ENCODE measurements at regions of chr16 and their contacts with region 1.

Region 1: GRCh38 chr16:75305364-75306098 is 54.1 kb upstream of the BCAR1 start:
- DNase-seq: peak; percentile 94
- H3K4me3 Mint-ChIP-seq: peak overlapping the region; percentile 36
- H3K27ac Mint-ChIP-seq: peak overlapping the region; percentile 90
- H3K4me1 Mint-ChIP-seq: peaks cover 29% of the 10 kb centered on the region
- H3K27me3 Mint-ChIP-seq: no peaks in the 10 kb centered on the region

Region 2: DNA sequence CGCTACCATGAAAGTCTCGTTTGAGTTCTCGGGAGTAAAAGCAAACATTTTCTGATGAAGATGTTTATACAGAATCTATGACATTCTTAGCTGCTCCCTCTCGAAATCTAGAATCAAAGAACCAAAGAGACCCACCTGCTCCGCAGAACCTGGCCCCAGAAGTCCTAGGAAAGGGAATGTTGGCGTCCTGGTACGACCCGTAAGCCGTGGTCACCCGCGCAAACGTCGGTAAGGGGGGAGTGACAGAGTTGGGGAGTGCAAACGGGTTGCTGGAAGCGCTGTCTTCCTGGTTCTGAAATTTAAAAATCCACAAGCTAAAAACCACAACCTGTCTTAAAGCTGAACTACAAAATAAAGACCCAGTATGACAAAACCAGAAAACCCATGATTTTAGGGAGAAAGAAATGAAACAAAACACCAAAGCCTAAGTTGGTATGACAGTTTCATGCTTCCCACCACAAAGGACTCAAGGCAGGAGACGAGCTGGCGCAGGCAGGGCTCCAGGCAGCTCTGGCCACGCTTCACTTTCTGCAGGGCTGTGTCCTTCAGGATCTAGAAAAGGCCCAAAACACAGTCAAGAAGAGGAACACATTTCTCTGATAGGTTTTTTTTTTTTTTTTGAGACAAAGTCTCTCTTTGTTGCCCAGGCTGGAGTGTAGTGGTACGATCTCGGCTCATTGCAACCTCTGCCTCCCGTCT is 396.0 kb before region 1 on chr16:
- CTCF ChIA-PET with region 1: no interaction called
- intact Hi-C with region 1: no loop called
- DNase-seq: no peak
- H3K4me3 Mint-ChIP-seq: no peak overlapping the region
- H3K27ac Mint-ChIP-seq: no peak overlapping the region
- H3K4me1 Mint-ChIP-seq: no peaks in the 10 kb centered on the region
- H3K27me3 Mint-ChIP-seq: no peaks in the 10 kb centered on the region

Region 3: GRCh38 chr16:75011634-75012307 is 293.8 kb before region 1 on chr16:
- CTCF ChIA-PET with region 1: no interaction called
- intact Hi-C with region 1: loop called (anchors 1 kb)
- DNase-seq: peak; percentile 86
- H3K4me3 Mint-ChIP-seq: peak overlapping the region; percentile 62
- H3K27ac Mint-ChIP-seq: peak overlapping the region; percentile 95
- H3K4me1 Mint-ChIP-seq: peaks cover 48% of the 10 kb centered on the region
- H3K27me3 Mint-ChIP-seq: no peaks in the 10 kb centered on the region

Region 4: GRCh38 chr16:75251280-75252048 is 54.1 kb before region 1 on chr16 and contains the start of gene BCAR1:
- CTCF ChIA-PET with region 1: no interaction called
- intact Hi-C with region 1: loop called (anchors 2 kb)
- DNase-seq: peak; percentile 22
- H3K4me3 Mint-ChIP-seq: peak within 1 kb of the TSS; percentile 64
- H3K27ac Mint-ChIP-seq: no peak within 1 kb of the TSS
- H3K4me1 Mint-ChIP-seq: peaks cover 3% of the 10 kb centered on the region
- H3K27me3 Mint-ChIP-seq: peaks cover 31% of the 10 kb centered on the region
- total RNA-seq, gene BCAR1: 0.67 to 0.81 TPM

Region 5: GRCh38 chr16:75379911-75380847 is 74.6 kb after region 1 on chr16:
- CTCF ChIA-PET with region 1: no interaction called
- intact Hi-C with region 1: loop called (anchors 1 kb)
- DNase-seq: peak; percentile 53
- H3K4me3 Mint-ChIP-seq: no peak overlapping the region
- H3K27ac Mint-ChIP-seq: no peak overlapping the region
- H3K4me1 Mint-ChIP-seq: peaks cover 51% of the 10 kb centered on the region
- H3K27me3 Mint-ChIP-seq: peaks cover 2% of the 10 kb centered on the region

Region 6: GRCh38 chr16:75566040-75566810 is 260.7 kb after region 1 on chr16 and contains the start of gene GABARAPL2:
- CTCF ChIA-PET with region 1: no interaction called
- intact Hi-C with region 1: loop called (anchors 1 kb)
- DNase-seq: peak; percentile 89
- H3K4me3 Mint-ChIP-seq: peak within 1 kb of the TSS; percentile 98
- H3K27ac Mint-ChIP-seq: peak within 1 kb of the TSS; percentile 94
- H3K4me1 Mint-ChIP-seq: peaks cover 38% of the 10 kb centered on the region
- H3K27me3 Mint-ChIP-seq: peaks cover 3% of the 10 kb centered on the region
- total RNA-seq, gene GABARAPL2: 63.3 to 66.8 TPM

Region 7: DNA sequence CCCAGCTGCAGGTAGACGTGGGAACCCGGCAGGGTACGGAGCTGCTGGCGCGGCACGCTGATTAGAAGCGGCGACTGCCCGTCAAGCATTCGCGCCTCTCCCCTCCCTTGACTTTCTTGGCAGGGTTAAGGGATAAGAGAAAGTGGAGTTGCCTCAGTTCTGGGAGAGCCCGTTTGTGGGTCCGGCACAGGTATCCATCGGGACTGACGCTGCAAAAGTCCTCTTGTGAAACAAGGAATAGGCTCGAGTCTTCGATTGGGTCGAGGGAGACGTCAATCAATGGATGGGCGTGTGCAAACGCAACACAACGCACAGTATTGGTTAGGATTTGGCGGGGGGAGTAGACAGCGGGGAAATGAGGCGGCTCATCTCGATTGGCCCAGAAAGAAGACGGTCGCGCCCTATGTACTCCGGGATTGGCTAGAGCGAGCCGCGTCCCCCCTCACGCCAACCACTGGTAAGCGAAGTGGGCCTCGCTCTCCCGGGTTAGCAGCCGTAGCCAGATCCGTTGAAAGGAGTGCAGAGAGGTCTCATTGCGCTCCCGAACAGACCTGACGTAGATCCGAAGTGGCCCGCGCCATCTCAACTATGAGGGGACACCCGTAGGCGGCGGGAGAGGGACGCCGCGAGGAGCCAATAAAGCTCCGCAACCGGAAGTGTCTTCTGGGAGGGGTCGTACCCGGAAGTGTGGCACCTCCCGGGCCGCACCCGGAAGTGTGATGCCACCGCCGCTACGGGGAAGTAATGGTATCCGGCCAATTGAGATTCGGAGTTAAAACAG is 1885.1 kb after region 1 on chr16 and contains the start of gene MON1B:
- CTCF ChIA-PET with region 1: no interaction called
- intact Hi-C with region 1: loop called (anchors 5 kb)
- DNase-seq: peak; percentile 96
- H3K4me3 Mint-ChIP-seq: peak within 1 kb of the TSS; percentile 82
- H3K27ac Mint-ChIP-seq: peak within 1 kb of the TSS; percentile 99
- H3K4me1 Mint-ChIP-seq: peaks cover 29% of the 10 kb centered on the region
- H3K27me3 Mint-ChIP-seq: no peaks in the 10 kb centered on the region
- total RNA-seq, gene MON1B: 69.6 to 71.0 TPM

Measured in activated naive CD4-positive, alpha-beta T cell treated with anti-CD3 and anti-CD28 coated beads for 36 hours (primary cell).